AG04450 (cell line): ENCODE measurements at regions of chr11 and their contacts with region 1.

Region 1: GRCh38 chr11:119356349-119357031 is 10.0 kb upstream of the MFRP start:
- DNase-seq: no peak
- H3K4me3 ChIP-seq: peak overlapping the region; percentile 66
- H3K27ac ChIP-seq: no peak overlapping the region
- H3K27me3 ChIP-seq: peaks cover 20% of the 10 kb centered on the region
- CTCF ChIP-seq: peak; percentile 80

Region 2: GRCh38 chr11:118744046-118744445 is 612.4 kb before region 1 on chr11:
- CTCF ChIA-PET with region 1: no interaction called
- POLR2A ChIA-PET with region 1: no interaction called
- DNase-seq: no peak
- H3K4me3 ChIP-seq: no peak overlapping the region
- H3K27ac ChIP-seq: no peak overlapping the region
- H3K27me3 ChIP-seq: no peaks in the 10 kb centered on the region
- CTCF ChIP-seq: no peak

Region 3: DNA sequence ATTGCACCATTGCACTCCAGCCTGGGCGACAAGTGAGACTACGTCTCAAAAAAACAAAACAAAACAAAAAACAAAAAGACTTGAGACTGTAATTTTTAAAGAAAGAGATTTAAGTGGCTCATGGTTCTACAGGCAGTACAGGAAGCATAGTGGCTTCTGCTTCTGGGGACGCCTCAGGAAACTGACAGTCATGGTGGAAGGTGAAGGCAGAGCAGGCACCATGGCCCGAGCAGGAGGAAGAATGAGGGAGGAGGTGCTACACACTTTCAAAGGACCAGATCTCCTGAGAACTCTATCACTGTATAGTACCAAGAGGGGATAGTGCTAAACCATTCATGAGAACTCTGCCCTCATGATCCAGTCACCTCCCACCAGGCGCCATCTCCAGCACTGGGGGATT is 98.3 kb before region 1 on chr11:
- CTCF ChIA-PET with region 1: no interaction called
- POLR2A ChIA-PET with region 1: no interaction called
- DNase-seq: no peak
- H3K4me3 ChIP-seq: no peak overlapping the region
- H3K27ac ChIP-seq: no peak overlapping the region
- H3K27me3 ChIP-seq: no peaks in the 10 kb centered on the region
- CTCF ChIP-seq: no peak

Region 4: DNA sequence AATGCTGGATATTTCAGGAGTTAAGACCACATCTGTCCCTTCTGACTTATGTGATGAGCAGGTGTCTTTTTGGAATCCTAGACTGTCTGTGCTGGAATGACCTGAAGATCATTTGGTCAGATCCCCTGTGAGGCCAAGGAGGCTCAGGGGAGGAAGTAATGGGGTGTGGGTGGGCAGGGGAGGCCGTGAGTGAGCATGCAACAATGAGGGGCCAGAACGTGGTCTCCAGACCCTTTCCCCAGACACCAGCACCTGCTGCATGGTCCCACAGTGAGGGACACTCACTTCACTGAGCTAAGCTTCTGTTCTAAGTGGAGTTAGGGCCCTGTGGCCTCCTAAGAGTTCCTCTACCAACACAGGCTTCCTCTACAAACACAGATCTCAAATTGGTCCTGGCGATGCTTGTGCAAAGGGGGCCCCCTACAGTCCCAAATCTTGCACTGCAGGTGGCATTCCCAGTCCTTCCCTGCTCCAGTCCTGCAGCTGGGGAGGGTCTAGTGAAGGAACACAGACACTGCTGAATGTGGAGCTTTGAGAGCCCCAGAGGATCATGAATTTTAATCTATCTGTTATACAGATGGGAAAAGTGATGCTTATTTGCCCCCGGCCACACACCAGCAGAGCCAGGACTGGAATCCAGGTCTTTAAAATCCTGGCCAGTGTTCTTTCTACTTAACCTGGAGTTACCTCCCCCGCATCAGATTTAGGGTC is 17.6 kb after region 1 on chr11:
- CTCF ChIA-PET with region 1: interaction called, 102 read pairs
- POLR2A ChIA-PET with region 1: interaction called, 5 read pairs
- DNase-seq: peak; percentile 51
- H3K4me3 ChIP-seq: no peak overlapping the region
- H3K27ac ChIP-seq: no peak overlapping the region
- H3K27me3 ChIP-seq: peaks cover 12% of the 10 kb centered on the region
- CTCF ChIP-seq: peak; percentile 97

Region 5: DNA sequence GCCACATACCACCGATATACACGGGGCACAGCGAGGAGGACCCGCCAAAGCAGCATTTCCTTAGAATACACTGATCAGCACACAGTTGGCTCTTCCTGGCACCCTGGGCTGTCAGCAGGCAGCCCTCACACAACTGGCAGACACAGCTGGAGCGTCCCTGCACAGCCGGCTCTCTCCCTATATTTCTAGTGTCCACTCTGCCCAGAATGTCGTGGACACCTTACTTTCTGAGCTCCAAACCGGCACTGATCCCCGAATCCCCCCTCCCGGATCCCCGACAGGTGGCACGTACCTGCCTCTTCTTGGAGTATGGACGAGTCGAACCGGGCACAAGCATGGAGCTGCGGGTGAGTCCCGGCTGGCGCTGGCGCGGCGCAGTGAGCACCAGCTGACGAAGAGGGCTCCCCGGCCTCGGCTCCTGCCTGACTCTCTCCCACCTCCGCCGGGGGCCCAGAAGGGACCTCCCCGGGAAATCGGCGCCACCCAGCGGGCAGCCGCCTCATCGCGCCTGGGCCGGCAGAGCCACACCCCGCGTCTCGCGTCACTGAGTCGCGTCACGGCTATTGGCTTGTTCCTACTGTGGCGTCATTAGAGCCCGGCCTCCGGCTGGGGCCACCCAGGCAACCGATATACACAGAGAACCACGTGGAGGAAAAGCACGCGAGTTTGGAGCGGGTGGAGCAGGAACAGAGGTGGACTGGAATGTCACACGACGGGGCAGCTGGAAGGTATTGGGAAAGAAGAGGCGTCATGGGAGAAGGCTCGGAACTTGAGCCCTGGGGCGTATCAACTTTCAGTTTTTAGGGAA is 24.9 kb after region 1 on chr11 and contains the start of gene USP2:
- CTCF ChIA-PET with region 1: interaction called, 102 read pairs
- POLR2A ChIA-PET with region 1: interaction called, 4 read pairs
- DNase-seq: peak; percentile 88
- H3K4me3 ChIP-seq: peak within 1 kb of the TSS; percentile 68
- H3K27ac ChIP-seq: peak within 1 kb of the TSS; percentile 21
- H3K27me3 ChIP-seq: peaks cover 17% of the 10 kb centered on the region
- CTCF ChIP-seq: peak; percentile 78
- polyA plus RNA-seq, gene USP2: 0.32 and 0.46 TPM in 2 replicates

Region 6: DNA sequence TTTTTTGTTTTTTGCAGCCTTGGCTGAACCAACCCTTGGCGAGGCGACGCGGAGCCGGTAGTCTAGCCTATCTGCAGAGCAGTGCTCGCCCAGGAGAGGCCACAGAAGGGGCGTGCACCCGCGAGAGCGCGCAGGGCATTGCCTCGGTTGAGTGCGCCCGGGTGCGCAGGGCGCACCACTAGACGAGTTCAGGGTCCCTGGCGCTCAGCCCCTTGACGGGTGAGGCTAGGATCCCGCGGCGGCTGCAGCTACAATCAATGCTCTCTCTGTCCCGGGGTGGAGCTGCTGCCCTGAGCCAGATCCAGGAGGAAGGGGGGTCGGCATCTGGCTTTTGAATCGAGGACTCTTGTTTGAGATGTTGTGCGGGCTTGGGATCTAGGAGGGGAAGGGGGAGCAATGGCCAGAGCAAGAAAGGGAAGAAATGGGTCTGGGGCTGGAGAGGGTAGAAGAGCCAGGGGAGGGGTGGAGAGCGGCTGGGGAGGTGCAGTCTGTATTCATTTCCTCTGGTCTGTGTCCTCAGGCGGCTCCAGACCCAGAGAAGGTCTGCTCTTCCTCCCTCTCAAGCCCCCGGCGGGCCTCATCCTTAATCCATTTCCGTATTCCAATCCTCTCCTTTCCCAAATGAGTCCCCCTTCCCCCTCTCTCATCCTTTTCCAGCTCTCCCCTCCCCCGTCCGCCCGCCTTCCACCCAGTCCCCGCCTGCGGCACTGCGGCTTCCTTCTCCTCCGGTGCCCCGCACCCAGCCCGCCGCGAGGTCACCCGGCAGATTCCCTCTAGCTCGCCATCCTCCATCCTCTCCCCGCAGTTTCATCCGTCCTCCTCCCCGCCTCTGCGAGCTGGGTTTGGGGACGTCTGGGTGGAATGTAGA is 65.7 kb after region 1 on chr11:
- CTCF ChIA-PET with region 1: interaction called, 16 read pairs
- POLR2A ChIA-PET with region 1: interaction called, 3 read pairs
- DNase-seq: no peak
- H3K4me3 ChIP-seq: peak overlapping the region; percentile 89
- H3K27ac ChIP-seq: peak overlapping the region; percentile 47
- H3K27me3 ChIP-seq: no peaks in the 10 kb centered on the region
- CTCF ChIP-seq: no peak

Region 7: GRCh38 chr11:119460582-119460981 is 104.1 kb after region 1 on chr11:
- CTCF ChIA-PET with region 1: interaction called, 14 read pairs
- POLR2A ChIA-PET with region 1: no interaction called
- DNase-seq: peak; percentile 95
- H3K4me3 ChIP-seq: no peak overlapping the region
- H3K27ac ChIP-seq: peak overlapping the region; percentile 99
- H3K27me3 ChIP-seq: no peaks in the 10 kb centered on the region
- CTCF ChIP-seq: no peak

Region 8: GRCh38 chr11:119468511-119468910 is 112.0 kb after region 1 on chr11:
- CTCF ChIA-PET with region 1: interaction called, 123 read pairs
- POLR2A ChIA-PET with region 1: interaction called, 3 read pairs
- DNase-seq: no peak
- H3K4me3 ChIP-seq: no peak overlapping the region
- H3K27ac ChIP-seq: no peak overlapping the region
- H3K27me3 ChIP-seq: no peaks in the 10 kb centered on the region
- CTCF ChIP-seq: no peak